ENCODE measurements at regions of chr11 and their contacts with region 1.

Region 1: DNA sequence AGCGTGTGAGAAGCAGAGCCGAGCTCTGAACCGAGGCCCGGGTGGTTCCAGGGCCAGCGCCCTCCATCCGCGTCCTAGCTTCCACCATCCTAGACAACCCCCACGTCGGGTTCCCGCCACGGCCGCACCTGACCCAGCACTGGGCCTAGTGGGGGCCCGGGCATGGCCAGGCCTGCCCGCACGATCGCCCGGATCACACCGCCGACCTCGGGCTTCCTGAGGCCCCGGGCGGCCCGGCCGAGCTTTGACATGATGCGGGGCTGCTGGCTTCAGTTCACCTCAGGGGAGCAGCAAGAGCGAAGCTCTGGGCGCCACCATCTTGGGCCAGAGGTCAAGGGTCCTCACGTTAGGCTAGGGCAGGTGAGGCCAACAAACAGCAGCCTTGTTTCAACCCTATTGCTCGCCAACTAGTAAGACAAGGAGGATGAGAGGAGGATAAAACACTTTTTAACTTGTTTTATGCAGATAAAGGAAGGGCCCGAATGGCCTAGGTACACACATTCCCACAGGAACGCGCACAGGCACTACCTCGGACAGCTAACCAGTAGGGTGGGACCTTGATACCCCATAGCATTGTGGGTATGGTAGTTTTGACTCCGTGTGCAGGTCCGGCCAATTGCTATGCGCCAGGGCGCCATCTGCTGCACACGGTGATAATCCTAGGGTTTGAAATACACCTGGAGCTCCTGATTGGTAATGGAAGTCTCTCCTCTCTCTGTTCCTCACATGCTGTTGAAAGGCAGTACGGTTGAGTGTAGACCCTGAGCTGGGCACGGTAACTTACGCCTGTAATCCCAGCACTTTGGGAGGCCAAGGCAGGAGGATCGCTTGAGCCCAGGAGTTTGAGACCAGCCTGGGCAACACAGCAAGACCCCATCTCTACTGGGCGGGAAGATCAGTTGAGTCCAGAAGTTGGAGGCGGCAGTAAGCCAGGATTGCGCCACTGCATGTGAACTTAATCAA is at the start of gene MRPL11:
- DNase-seq: peak; percentile 97 to 98
- H3K4me3 ChIP-seq: peak within 1 kb of the TSS; percentile 81
- H3K4me3 Mint-ChIP-seq: peak within 1 kb of the TSS; percentile 100
- H3K27ac Mint-ChIP-seq: peak within 1 kb of the TSS; percentile 100
- H3K4me1 ChIP-seq: peaks cover 17% of the 10 kb centered on the region
- H3K4me1 Mint-ChIP-seq: peaks cover 27% of the 10 kb centered on the region
- H3K27me3 ChIP-seq: no peaks in the 10 kb centered on the region
- H3K27me3 Mint-ChIP-seq: no peaks in the 10 kb centered on the region
- CTCF ChIP-seq: peak; percentile 79 to 96
- total RNA-seq, gene MRPL11: 201 and 206 TPM in 2 replicates

Region 2: GRCh38 chr11:66386171-66387069 is 52.4 kb before region 1 on chr11:
- CTCF ChIA-PET with region 1: interaction called, 16 read pairs
- POLR2A ChIA-PET with region 1: no interaction called
- intact Hi-C with region 1: no loop called
- DNase-seq: peak; percentile 85 to 86
- H3K4me3 ChIP-seq: no peak overlapping the region
- H3K4me3 Mint-ChIP-seq: peak overlapping the region; percentile 61
- H3K27ac Mint-ChIP-seq: no peak overlapping the region
- H3K4me1 ChIP-seq: no peaks in the 10 kb centered on the region
- H3K4me1 Mint-ChIP-seq: no peaks in the 10 kb centered on the region
- H3K27me3 ChIP-seq: no peaks in the 10 kb centered on the region
- H3K27me3 Mint-ChIP-seq: peaks cover 5% of the 10 kb centered on the region
- CTCF ChIP-seq: peak; percentile 86 to 94

Region 3: DNA sequence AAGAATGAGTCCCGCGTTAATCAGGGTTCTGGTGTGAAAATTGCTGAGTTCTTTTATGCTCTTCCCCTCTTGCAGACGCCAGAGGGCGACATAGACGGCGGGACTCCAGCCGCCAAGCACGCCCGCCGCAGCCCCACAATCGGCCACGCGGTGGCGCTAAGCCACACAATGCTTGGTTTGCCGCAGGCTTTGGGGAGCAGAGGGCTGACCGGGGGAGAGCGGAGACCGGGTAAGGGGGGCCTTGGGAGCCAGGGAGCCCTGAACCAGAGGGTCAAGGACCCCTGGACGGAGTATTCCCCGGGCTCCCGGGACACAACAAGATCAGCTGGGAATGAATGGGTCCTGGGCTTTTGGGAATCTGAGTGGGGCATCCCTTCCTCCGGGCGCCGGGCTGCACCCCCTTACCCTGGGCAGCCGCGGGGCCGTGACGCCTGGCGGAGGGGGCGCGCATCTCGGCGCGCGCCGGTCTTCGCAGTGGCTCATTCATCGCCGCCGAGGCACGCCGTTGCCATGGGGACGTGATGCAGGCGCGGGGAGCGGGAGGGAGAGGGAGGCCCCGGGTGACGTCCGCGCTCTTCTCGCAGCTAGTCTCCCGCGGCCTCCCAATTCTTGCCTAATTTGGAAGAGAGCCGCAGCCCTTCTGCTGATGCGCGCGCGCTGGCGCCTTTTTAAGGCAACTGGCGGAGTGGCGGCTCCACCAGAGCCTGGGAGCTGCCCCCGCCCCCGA is 30.1 kb before region 1 on chr11:
- CTCF ChIA-PET with region 1: interaction called, 9 read pairs
- POLR2A ChIA-PET with region 1: no interaction called
- intact Hi-C with region 1: loop called (anchors 1 kb)
- DNase-seq: peak; percentile 76 to 93
- H3K4me3 ChIP-seq: peak overlapping the region; percentile 19
- H3K4me3 Mint-ChIP-seq: peak overlapping the region; percentile 73
- H3K27ac Mint-ChIP-seq: no peak overlapping the region
- H3K4me1 ChIP-seq: no peaks in the 10 kb centered on the region
- H3K4me1 Mint-ChIP-seq: no peaks in the 10 kb centered on the region
- H3K27me3 ChIP-seq: no peaks in the 10 kb centered on the region
- H3K27me3 Mint-ChIP-seq: peaks cover 28% of the 10 kb centered on the region
- CTCF ChIP-seq: peak; percentile 99 to 100

Region 4: DNA sequence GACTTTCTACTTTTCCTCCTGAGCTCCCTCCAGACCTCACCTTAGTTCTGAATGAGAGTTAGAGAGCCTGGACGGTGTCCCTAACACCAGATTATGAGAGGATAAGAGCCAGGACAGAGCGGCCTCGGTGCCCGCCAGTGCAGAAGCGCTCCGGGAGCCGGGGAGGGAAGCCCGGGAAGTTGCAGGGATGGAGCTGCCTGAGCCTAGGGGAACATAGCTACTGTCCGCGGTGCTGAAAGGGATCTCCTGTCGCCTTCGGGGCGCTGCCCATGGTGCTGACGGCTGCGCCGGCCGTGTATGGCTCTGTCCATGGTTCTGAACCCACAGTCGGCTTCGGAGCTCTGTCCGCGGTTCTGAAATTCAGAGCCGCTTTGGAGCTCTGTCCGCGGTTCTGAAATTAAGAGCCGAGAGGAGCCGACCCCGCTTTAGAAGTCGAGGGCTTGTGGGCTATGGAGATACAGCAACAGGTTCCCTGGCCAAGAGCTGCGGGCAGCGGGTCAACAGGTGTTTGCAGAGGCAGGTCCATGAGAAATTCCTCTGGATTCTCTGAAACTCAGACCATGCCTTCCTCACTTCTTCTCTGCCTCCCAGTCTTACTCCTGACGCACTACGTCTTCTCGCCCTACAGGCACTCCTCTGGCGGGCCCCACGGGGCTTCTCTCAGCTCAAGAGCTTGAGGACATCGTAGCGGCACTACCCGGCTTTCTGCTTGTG is 17.1 kb before region 1 on chr11:
- CTCF ChIA-PET with region 1: interaction called, 29 read pairs
- POLR2A ChIA-PET with region 1: interaction called, 5 read pairs
- intact Hi-C with region 1: loop called (anchors 1 kb)
- DNase-seq: peak; percentile 92 to 96
- H3K4me3 ChIP-seq: no peak overlapping the region
- H3K4me3 Mint-ChIP-seq: no peak overlapping the region
- H3K27ac Mint-ChIP-seq: no peak overlapping the region
- H3K4me1 ChIP-seq: no peaks in the 10 kb centered on the region
- H3K4me1 Mint-ChIP-seq: peaks cover 14% of the 10 kb centered on the region
- H3K27me3 ChIP-seq: no peaks in the 10 kb centered on the region; the same call in 1 of the 2 replicates
- H3K27me3 Mint-ChIP-seq: peaks cover 9% of the 10 kb centered on the region
- CTCF ChIP-seq: no peak

Region 5: GRCh38 chr11:66459138-66459778 is 20.5 kb after region 1 on chr11:
- CTCF ChIA-PET with region 1: interaction called, 10 read pairs
- POLR2A ChIA-PET with region 1: no interaction called
- intact Hi-C with region 1: loop called (anchors 2 kb)
- DNase-seq: peak in 1 of 2 experiments; percentile 39
- H3K4me3 ChIP-seq: no peak overlapping the region
- H3K4me3 Mint-ChIP-seq: no peak overlapping the region
- H3K27ac Mint-ChIP-seq: no peak overlapping the region
- H3K4me1 ChIP-seq: peaks cover 19% of the 10 kb centered on the region
- H3K4me1 Mint-ChIP-seq: peaks cover 22% of the 10 kb centered on the region
- H3K27me3 ChIP-seq: no peaks in the 10 kb centered on the region
- H3K27me3 Mint-ChIP-seq: no peaks in the 10 kb centered on the region
- CTCF ChIP-seq: no peak

Region 6: DNA sequence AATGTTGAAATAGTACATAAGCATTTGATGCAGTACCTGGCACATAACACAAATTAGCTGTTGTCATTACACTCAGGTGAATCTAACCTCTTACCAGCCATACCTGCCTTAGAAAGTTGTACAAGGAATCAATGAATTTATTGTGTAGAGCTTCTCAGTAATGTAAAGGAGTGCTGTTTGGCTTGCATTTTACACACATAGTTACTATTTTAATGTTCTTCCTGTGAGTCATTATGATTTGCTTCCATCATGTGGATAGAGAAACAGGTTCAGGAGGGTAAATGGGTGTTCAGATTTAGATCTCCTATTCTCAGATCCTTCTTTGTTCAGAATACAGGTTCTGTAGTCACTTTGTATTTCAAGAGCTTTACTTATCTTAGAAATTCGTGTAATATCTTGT is 376.9 kb after region 1 on chr11:
- CTCF ChIA-PET with region 1: no interaction called
- POLR2A ChIA-PET with region 1: no interaction called
- intact Hi-C with region 1: no loop called
- DNase-seq: no peak
- H3K4me3 ChIP-seq: no peak overlapping the region
- H3K4me3 Mint-ChIP-seq: no peak overlapping the region
- H3K27ac Mint-ChIP-seq: no peak overlapping the region
- H3K4me1 ChIP-seq: peaks cover 37% of the 10 kb centered on the region
- H3K4me1 Mint-ChIP-seq: peaks cover 11% of the 10 kb centered on the region
- H3K27me3 ChIP-seq: no peaks in the 10 kb centered on the region
- H3K27me3 Mint-ChIP-seq: no peaks in the 10 kb centered on the region
- CTCF ChIP-seq: no peak

Measured in Caco-2 (cell line).